Dendritic cell treated with granulocyte-macrophage colony-stimulating factor and Interleukin-4, amounts not matched to agents 40 ng/mL and 50 ng/mL, for 4 days (primary cell): ENCODE measurements at regions of chr7 and their contacts with region 1.

Region 1: DNA sequence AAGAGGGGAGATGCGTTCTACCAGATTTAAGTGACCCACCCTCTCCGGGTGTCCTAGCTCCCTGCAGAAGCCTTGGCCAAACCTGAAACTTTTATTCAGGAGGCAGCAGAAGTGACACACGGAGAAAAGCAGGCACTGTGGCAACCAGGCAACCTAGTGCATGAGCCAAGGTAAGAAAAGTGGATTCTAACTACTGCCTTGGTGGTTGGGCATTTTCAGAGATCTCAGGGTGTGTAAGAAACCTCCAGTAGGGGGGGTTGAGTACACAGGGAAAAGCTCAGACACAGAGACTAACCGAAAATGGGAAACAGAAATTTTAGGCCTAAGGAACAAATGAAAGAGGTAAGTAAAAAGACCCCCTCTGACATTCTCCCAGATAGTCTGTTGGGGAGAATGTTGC is 645.7 kb downstream of the ANKRD7 start:
- H3K4me3 Mint-ChIP-seq: no peak overlapping the region
- H3K27ac Mint-ChIP-seq: no peak overlapping the region
- H3K4me1 Mint-ChIP-seq: no peaks in the 10 kb centered on the region
- H3K27me3 Mint-ChIP-seq: no peaks in the 10 kb centered on the region

Region 2: GRCh38 chr7:118699222-118699621 is 171.0 kb before region 1 on chr7:
- intact Hi-C with region 1: no loop called
- H3K4me3 Mint-ChIP-seq: no peak overlapping the region
- H3K27ac Mint-ChIP-seq: no peak overlapping the region
- H3K4me1 Mint-ChIP-seq: no peaks in the 10 kb centered on the region
- H3K27me3 Mint-ChIP-seq: no peaks in the 10 kb centered on the region

Region 3: DNA sequence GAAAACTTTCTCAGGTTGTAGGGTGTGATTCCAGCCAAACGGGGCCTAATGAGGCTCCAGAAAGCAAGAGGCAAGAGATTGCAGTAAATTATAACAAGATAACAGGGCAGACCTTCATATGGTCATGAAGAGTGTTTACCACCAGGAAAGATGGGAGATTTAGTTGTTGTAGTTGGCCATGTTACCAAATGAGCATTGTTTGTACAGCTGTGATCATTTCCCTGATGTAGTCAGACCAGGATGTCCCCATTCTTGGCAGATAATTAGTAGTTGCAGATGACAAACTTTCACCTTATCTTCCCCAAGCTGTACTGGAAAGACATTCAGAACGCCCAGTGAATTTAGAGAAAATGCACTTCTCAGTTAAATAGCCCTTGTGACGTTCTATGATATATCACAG is 14.9 kb before region 1 on chr7:
- intact Hi-C with region 1: loop called (anchors 1 kb)
- H3K4me3 Mint-ChIP-seq: no peak overlapping the region
- H3K27ac Mint-ChIP-seq: no peak overlapping the region
- H3K4me1 Mint-ChIP-seq: no peaks in the 10 kb centered on the region
- H3K27me3 Mint-ChIP-seq: no peaks in the 10 kb centered on the region